ENCODE measurements at regions of chr9 and their contacts with region 1.

Region 1: GRCh38 chr9:137423004-137423874 is at the starts of genes EXD3 and NOXA1:
- DNase-seq: peak; percentile 86
- ATAC-seq: peak; percentile 79
- H3K4me3 ChIP-seq: peak within 1 kb of the TSS; percentile 74 to 79
- H3K27ac ChIP-seq: peak within 1 kb of the TSS; percentile 99
- H3K4me1 ChIP-seq: peaks cover 21 to 33% of the 10 kb centered on the region in 2 experiments
- H3K27me3 ChIP-seq: no peaks in the 10 kb centered on the region
- CTCF ChIP-seq: peak in 2 of 3 experiments; percentile 46 to 72; a peak in 4 of 6 replicates
- POLR2A ChIP-seq: no peak
- RAD21 ChIP-seq: no peak
- total RNA-seq, gene EXD3: 25.4 TPM
- total RNA-seq, gene NOXA1: 13.2 TPM

Region 2: GRCh38 chr9:136619742-136620440 is 803.3 kb before region 1 on chr9:
- CTCF ChIA-PET with region 1: no interaction called
- POLR2A ChIA-PET with region 1: no interaction called
- RAD21 ChIA-PET with region 1: no interaction called
- intact Hi-C with region 1: no loop called
- DNase-seq: no peak
- ATAC-seq: no peak
- H3K4me3 ChIP-seq: no peak overlapping the region
- H3K27ac ChIP-seq: no peak overlapping the region
- H3K4me1 ChIP-seq: peaks cover 0 to 9% of the 10 kb centered on the region in 2 experiments; a peak in 3 of 4 replicates
- H3K27me3 ChIP-seq: no peaks in the 10 kb centered on the region
- CTCF ChIP-seq: no peak
- POLR2A ChIP-seq: no peak
- RAD21 ChIP-seq: no peak

Region 3: DNA sequence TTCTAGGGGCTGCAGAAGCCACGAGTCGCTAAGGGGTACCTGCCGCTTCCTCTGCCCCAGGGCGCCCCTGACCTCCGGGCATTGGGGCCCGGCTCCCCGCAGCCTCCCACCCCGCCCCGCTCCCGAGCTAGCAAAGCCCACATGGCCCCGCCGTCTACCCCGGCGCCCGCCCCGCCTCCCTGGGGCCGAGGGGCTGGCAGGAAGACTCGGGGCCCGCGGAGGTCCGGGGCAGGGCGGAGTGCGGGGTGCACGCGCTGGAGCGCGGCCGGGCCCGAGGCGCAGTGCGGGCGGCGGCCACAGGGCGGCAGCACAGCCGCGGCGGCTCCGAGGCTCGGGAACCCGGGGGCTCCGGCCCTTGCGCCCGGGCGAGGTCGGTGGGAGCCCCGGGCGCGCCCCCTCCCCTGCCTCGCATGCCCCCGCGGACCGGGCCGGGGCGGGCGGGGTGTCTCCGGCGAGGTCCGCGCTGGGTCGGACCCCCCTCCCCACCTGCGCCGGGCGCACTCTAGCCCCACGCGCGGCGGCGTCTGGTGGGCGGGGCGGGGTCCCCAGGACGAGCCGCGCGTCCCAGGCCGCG is 127.9 kb before region 1 on chr9:
- CTCF ChIA-PET with region 1: interaction called, 5 read pairs
- POLR2A ChIA-PET with region 1: no interaction called
- RAD21 ChIA-PET with region 1: no interaction called
- intact Hi-C with region 1: loop called (anchors 5 kb)
- DNase-seq: no peak
- ATAC-seq: peak; percentile 76
- H3K4me3 ChIP-seq: peak overlapping the region; percentile 42 to 51; a peak in 3 of 4 replicates
- H3K27ac ChIP-seq: peak overlapping the region; percentile 34; the same call in 1 of the 2 replicates
- H3K4me1 ChIP-seq: peaks cover 28 to 57% of the 10 kb centered on the region in 2 experiments
- H3K27me3 ChIP-seq: no peaks in the 10 kb centered on the region
- CTCF ChIP-seq: peak in 2 of 3 experiments; percentile 25 to 36; a peak in 1 of 6 replicates
- POLR2A ChIP-seq: no peak
- RAD21 ChIP-seq: no peak

Region 4: DNA sequence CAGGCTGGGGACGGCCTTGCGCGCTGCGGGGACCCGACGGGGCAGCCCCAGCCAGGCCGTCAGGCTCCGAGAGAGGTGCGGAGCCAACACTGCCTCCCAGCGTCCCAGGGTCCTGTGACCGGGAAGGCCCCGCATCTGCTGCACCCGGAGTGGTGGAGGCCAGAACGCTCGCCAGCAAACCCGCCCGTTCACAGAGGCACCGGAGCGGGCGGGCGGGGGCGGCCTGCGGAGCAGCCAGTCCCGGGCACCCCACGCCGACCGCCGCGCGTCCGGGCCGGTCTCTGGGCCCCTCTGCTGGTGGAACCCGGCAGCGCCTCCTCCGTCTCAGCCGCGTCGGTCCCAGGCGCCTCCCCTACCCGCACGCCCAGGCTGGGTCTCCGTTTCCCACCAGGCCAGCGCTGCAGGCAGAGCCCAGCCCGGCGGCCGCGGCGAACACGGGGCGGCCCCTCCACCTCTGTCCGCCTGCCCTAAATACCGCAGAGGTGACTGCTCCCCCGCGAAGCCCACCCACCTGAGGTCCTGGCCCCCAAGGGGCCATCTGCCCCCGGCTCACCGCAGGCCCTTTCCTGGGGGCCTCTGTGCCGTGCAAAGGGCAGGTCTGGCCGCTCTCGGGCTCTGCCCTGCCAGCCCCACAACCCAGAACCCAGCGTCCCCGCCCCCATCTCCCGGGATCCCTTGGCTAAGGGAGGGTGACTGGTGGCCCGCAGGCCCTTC is 16.2 kb before region 1 on chr9:
- CTCF ChIA-PET with region 1: interaction called, 7 read pairs
- POLR2A ChIA-PET with region 1: interaction called, 10 read pairs
- RAD21 ChIA-PET with region 1: interaction called in 1 of 2 experiments, 14 read pairs
- intact Hi-C with region 1: no loop called
- DNase-seq: no peak
- ATAC-seq: peak; percentile 79
- H3K4me3 ChIP-seq: peak overlapping the region; percentile 26 to 51
- H3K27ac ChIP-seq: no peak overlapping the region; the same call in 1 of the 2 replicates
- H3K4me1 ChIP-seq: peaks cover 26 to 50% of the 10 kb centered on the region in 2 experiments
- H3K27me3 ChIP-seq: no peaks in the 10 kb centered on the region
- CTCF ChIP-seq: peak in 2 of 3 experiments; percentile 58 to 81; a peak in 4 of 6 replicates
- POLR2A ChIP-seq: no peak
- RAD21 ChIP-seq: no peak

Region 5: DNA sequence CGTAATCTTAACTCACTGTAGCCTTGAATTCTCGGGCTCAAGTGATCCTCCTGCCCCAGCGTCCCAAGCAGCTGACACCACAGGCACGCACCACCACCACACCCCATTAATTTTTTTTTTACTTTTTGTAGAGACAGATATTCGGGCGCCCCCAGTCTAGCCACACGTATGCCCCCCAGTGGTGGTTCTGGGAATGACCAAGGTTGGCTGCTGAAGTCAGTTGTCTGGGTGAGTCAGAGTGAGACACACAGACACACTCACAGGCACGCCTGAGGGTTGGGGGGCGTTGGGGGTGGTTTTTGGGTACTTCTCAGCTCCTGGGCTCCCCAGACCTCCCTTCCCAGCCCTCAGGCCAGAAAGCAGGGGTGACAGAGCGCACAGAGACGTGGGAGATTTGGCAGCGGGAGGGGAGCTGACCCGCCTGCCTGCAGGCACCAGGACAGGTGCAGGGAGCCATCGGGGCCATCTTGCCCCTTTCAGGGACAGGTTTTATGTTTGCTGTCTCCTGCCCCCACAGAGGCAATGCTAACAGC is 22.1 kb after region 1 on chr9:
- CTCF ChIA-PET with region 1: interaction called, 10 read pairs
- POLR2A ChIA-PET with region 1: interaction called, 3 read pairs
- RAD21 ChIA-PET with region 1: interaction called in 1 of 2 experiments, 3 read pairs
- intact Hi-C with region 1: no loop called
- DNase-seq: peak; percentile 56
- ATAC-seq: peak; percentile 65
- H3K4me3 ChIP-seq: peak overlapping the region; percentile 4 to 17; a peak in 1 of 4 replicates
- H3K27ac ChIP-seq: no peak overlapping the region; the same call in 1 of the 2 replicates
- H3K4me1 ChIP-seq: peaks cover 16 to 33% of the 10 kb centered on the region in 2 experiments
- H3K27me3 ChIP-seq: no peaks in the 10 kb centered on the region
- CTCF ChIP-seq: peak; percentile 77 to 93 (median 88)
- POLR2A ChIP-seq: no peak
- RAD21 ChIP-seq: peak; percentile 84